ENCODE measurements at regions of chr18 and their contacts with region 1.

Region 1: GRCh38 chr18:72672364-72673184 is 128.4 kb upstream of the CBLN2 start:
- DNase-seq: peak; percentile 12
- H3K4me3 ChIP-seq: no peak overlapping the region
- H3K27ac ChIP-seq: no peak overlapping the region
- H3K4me1 ChIP-seq: no peaks in the 10 kb centered on the region
- H3K27me3 ChIP-seq: no peaks in the 10 kb centered on the region
- CTCF ChIP-seq: peak; percentile 73 to 78

Region 2: GRCh38 chr18:70931942-70932814 is 1740.4 kb before region 1 on chr18:
- CTCF ChIA-PET with region 1: no interaction called
- dilution Hi-C with region 1: no loop called
- in situ Hi-C with region 1: no loop called
- intact Hi-C with region 1: loop called (anchors 2 kb)
- DNase-seq: peak; percentile 1
- H3K4me3 ChIP-seq: no peak overlapping the region
- H3K27ac ChIP-seq: no peak overlapping the region
- H3K4me1 ChIP-seq: no peaks in the 10 kb centered on the region
- H3K27me3 ChIP-seq: no peaks in the 10 kb centered on the region
- CTCF ChIP-seq: peak; percentile 37 to 51

Region 3: GRCh38 chr18:72652990-72653593 is 19.5 kb before region 1 on chr18:
- CTCF ChIA-PET with region 1: no interaction called
- dilution Hi-C with region 1: no loop called
- in situ Hi-C with region 1: no loop called
- intact Hi-C with region 1: loop called (anchors 2 kb)
- DNase-seq: peak; percentile 32
- H3K4me3 ChIP-seq: no peak overlapping the region
- H3K27ac ChIP-seq: no peak overlapping the region
- H3K4me1 ChIP-seq: no peaks in the 10 kb centered on the region
- H3K27me3 ChIP-seq: no peaks in the 10 kb centered on the region
- CTCF ChIP-seq: peak; percentile 52 to 54

Region 4: GRCh38 chr18:72840109-72840508 is 167.5 kb after region 1 on chr18:
- CTCF ChIA-PET with region 1: no interaction called
- dilution Hi-C with region 1: no loop called
- in situ Hi-C with region 1: no loop called
- intact Hi-C with region 1: no loop called
- DNase-seq: no peak
- H3K4me3 ChIP-seq: no peak overlapping the region
- H3K27ac ChIP-seq: no peak overlapping the region
- H3K4me1 ChIP-seq: no peaks in the 10 kb centered on the region
- H3K27me3 ChIP-seq: no peaks in the 10 kb centered on the region
- CTCF ChIP-seq: no peak

Measured in mammary epithelial cell (primary cell).